HEK293 (cell line): ENCODE measurements at regions of chr12 and their contacts with region 1.

Region 1: DNA sequence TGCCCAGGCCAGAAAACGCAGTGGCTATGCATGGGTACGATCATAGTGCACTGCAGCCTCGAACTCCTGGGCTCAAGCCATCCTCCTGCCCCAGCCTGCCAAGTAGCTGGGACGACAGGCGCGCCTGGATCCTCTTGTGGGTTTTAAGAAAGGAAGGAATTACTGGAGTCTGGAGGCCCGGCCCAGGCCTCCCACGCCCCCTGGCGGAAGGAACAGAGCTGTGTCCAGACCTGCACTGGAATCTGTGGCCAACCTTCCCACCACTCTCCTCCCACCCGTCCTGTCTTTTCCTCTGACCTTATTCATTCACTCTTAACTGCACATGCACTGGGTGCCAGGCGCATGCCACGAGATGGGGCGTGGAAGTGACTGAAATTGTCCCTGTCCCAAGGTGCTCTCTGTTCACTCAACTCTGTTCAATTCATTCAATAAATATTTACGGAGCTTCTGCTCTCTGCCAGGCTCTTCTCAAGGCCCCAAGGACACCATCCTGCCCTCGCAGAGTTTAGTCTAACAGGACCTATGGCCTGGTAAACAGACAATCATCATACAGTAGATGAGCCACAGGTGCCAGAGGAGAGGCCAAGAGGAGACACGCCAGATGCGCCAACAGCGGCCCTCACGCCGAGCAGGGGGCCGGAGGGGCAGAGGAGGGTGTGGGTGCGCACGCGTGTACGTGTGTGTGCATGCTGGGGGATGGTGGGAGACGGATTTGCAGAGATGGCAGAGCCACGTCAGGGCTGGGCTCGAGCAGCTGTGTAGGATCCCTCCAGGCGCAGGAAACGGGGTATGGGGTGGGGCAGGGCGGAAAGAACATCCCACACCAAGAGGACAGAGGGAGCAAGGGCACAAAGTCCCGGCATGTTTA is 13.7 kb upstream of the TMEM106C start:
- H3K4me3 ChIP-seq: no peak overlapping the region
- H3K27ac ChIP-seq: no peak overlapping the region
- H3K4me1 ChIP-seq: no peaks in the 10 kb centered on the region; the same call in 1 of the 2 replicates
- CTCF ChIP-seq: peak; percentile 87

Region 2: GRCh38 chr12:47734725-47735480 is 214.8 kb before region 1 on chr12:
- CTCF ChIA-PET with region 1: no interaction called
- POLR2A ChIA-PET with region 1: no interaction called
- H3K4me3 ChIP-seq: no peak overlapping the region
- H3K27ac ChIP-seq: no peak overlapping the region
- H3K4me1 ChIP-seq: no peaks in the 10 kb centered on the region
- CTCF ChIP-seq: no peak

Region 3: GRCh38 chr12:47904713-47905310 is 44.9 kb before region 1 on chr12 and contains the start of gene VDR:
- CTCF ChIA-PET with region 1: interaction called, 21 read pairs
- POLR2A ChIA-PET with region 1: interaction called, 4 read pairs
- H3K4me3 ChIP-seq: peak within 1 kb of the TSS; percentile 56
- H3K27ac ChIP-seq: peak within 1 kb of the TSS; percentile 48; the same call in 1 of the 2 replicates
- H3K4me1 ChIP-seq: peaks cover 14% of the 10 kb centered on the region
- CTCF ChIP-seq: no peak

Region 4: GRCh38 chr12:47938093-47938492 is 11.6 kb before region 1 on chr12:
- CTCF ChIA-PET with region 1: interaction called, 10 read pairs
- POLR2A ChIA-PET with region 1: no interaction called
- H3K4me3 ChIP-seq: no peak overlapping the region
- H3K27ac ChIP-seq: no peak overlapping the region
- H3K4me1 ChIP-seq: no peaks in the 10 kb centered on the region
- CTCF ChIP-seq: no peak

Region 5: GRCh38 chr12:47963340-47964040 is 13.8 kb after region 1 on chr12 and contains the start of gene TMEM106C:
- CTCF ChIA-PET with region 1: interaction called, 31 read pairs
- POLR2A ChIA-PET with region 1: interaction called, 4 read pairs
- H3K4me3 ChIP-seq: peak within 1 kb of the TSS; percentile 81
- H3K27ac ChIP-seq: peak within 1 kb of the TSS; percentile 67; the same call in 1 of the 2 replicates
- H3K4me1 ChIP-seq: no peaks in the 10 kb centered on the region; the same call in 1 of the 2 replicates
- CTCF ChIP-seq: peak; percentile 99